ENCODE measurements at regions of chr4 and their contacts with region 1.

Region 1: GRCh38 chr4:15906024-15906443 is 32.5 kb downstream of the FGFBP1 start:
- DNase-seq: peak; percentile 96 to 98
- H3K4me3 ChIP-seq: peak overlapping the region; percentile 46; the same call in 1 of the 2 replicates
- H3K27ac ChIP-seq: peak overlapping the region; percentile 94
- H3K4me1 ChIP-seq: peaks cover 43% of the 10 kb centered on the region
- H3K27me3 ChIP-seq: no peaks in the 10 kb centered on the region
- CTCF ChIP-seq: no peak

Region 2: GRCh38 chr4:15690020-15690809 is 215.8 kb before region 1 on chr4:
- CTCF ChIA-PET with region 1: no interaction called
- POLR2A ChIA-PET with region 1: interaction called, 8 read pairs
- intact Hi-C with region 1: loop called (anchors 2 kb)
- DNase-seq: peak; percentile 47 to 88
- H3K4me3 ChIP-seq: no peak overlapping the region
- H3K27ac ChIP-seq: peak overlapping the region; percentile 82
- H3K4me1 ChIP-seq: peaks cover 37% of the 10 kb centered on the region
- H3K27me3 ChIP-seq: no peaks in the 10 kb centered on the region
- CTCF ChIP-seq: no peak

Region 3: GRCh38 chr4:15882675-15883086 is 23.4 kb before region 1 on chr4:
- CTCF ChIA-PET with region 1: interaction called, 12 read pairs
- POLR2A ChIA-PET with region 1: no interaction called
- intact Hi-C with region 1: loop called (anchors 1 kb)
- DNase-seq: peak; percentile 51 to 82
- H3K4me3 ChIP-seq: no peak overlapping the region
- H3K27ac ChIP-seq: 0 out of 2 replicates have a peak overlapping the region, but pooled peaks have one; percentile 7
- H3K4me1 ChIP-seq: no peaks in the 10 kb centered on the region
- H3K27me3 ChIP-seq: no peaks in the 10 kb centered on the region
- CTCF ChIP-seq: peak; percentile 93

Region 4: GRCh38 chr4:15893962-15894361 is 12.1 kb before region 1 on chr4:
- CTCF ChIA-PET with region 1: interaction called, 4 read pairs
- POLR2A ChIA-PET with region 1: interaction called, 3 read pairs
- intact Hi-C with region 1: loop called (anchors 1 kb)
- DNase-seq: peak; percentile 52 to 92
- H3K4me3 ChIP-seq: no peak overlapping the region
- H3K27ac ChIP-seq: peak overlapping the region; percentile 61
- H3K4me1 ChIP-seq: peaks cover 22% of the 10 kb centered on the region
- H3K27me3 ChIP-seq: no peaks in the 10 kb centered on the region
- CTCF ChIP-seq: no peak

Region 5: GRCh38 chr4:15920723-15921591 is 14.9 kb after region 1 on chr4:
- CTCF ChIA-PET with region 1: no interaction called
- POLR2A ChIA-PET with region 1: interaction called, 4 read pairs
- intact Hi-C with region 1: loop called (anchors 1 kb)
- DNase-seq: peak; percentile 87 to 92
- H3K4me3 ChIP-seq: no peak overlapping the region
- H3K27ac ChIP-seq: peak overlapping the region; percentile 90
- H3K4me1 ChIP-seq: peaks cover 47% of the 10 kb centered on the region
- H3K27me3 ChIP-seq: no peaks in the 10 kb centered on the region
- CTCF ChIP-seq: no peak

Region 6: GRCh38 chr4:15956179-15956850 is 50.3 kb after region 1 on chr4:
- CTCF ChIA-PET with region 1: interaction called, 17 read pairs
- POLR2A ChIA-PET with region 1: no interaction called
- intact Hi-C with region 1: loop called (anchors 1 kb)
- DNase-seq: peak; percentile 66 to 73
- H3K4me3 ChIP-seq: no peak overlapping the region
- H3K27ac ChIP-seq: no peak overlapping the region
- H3K4me1 ChIP-seq: peaks cover 5% of the 10 kb centered on the region; the same call in 1 of the 2 replicates
- H3K27me3 ChIP-seq: no peaks in the 10 kb centered on the region
- CTCF ChIP-seq: peak; percentile 93

Region 7: GRCh38 chr4:16140520-16141249 is 234.7 kb after region 1 on chr4:
- CTCF ChIA-PET with region 1: no interaction called
- POLR2A ChIA-PET with region 1: no interaction called
- intact Hi-C with region 1: loop called (anchors 5 kb)
- DNase-seq: peak; percentile 82 to 95
- H3K4me3 ChIP-seq: no peak overlapping the region
- H3K27ac ChIP-seq: peak overlapping the region; percentile 68
- H3K4me1 ChIP-seq: peaks cover 23% of the 10 kb centered on the region
- H3K27me3 ChIP-seq: no peaks in the 10 kb centered on the region
- CTCF ChIP-seq: no peak

Measured in PC-9 (cell line).